Activated B cell treated with CpG ODN at 0.5 μM for 24 hours (primary cell): ENCODE measurements at regions of chrX and their contacts with region 1.

Region 1: GRCh38 chrX:120244735-120245498 is 5.7 kb upstream of the ZBTB33 start:
- DNase-seq: peak; percentile 40
- ATAC-seq: peak; percentile 82
- H3K4me3 Mint-ChIP-seq: peak overlapping the region; percentile 94
- H3K27ac Mint-ChIP-seq: peak overlapping the region; percentile 93
- H3K4me1 Mint-ChIP-seq: peaks cover 16% of the 10 kb centered on the region
- H3K27me3 Mint-ChIP-seq: no peaks in the 10 kb centered on the region
- CTCF ChIP-seq: no peak

Region 2: DNA sequence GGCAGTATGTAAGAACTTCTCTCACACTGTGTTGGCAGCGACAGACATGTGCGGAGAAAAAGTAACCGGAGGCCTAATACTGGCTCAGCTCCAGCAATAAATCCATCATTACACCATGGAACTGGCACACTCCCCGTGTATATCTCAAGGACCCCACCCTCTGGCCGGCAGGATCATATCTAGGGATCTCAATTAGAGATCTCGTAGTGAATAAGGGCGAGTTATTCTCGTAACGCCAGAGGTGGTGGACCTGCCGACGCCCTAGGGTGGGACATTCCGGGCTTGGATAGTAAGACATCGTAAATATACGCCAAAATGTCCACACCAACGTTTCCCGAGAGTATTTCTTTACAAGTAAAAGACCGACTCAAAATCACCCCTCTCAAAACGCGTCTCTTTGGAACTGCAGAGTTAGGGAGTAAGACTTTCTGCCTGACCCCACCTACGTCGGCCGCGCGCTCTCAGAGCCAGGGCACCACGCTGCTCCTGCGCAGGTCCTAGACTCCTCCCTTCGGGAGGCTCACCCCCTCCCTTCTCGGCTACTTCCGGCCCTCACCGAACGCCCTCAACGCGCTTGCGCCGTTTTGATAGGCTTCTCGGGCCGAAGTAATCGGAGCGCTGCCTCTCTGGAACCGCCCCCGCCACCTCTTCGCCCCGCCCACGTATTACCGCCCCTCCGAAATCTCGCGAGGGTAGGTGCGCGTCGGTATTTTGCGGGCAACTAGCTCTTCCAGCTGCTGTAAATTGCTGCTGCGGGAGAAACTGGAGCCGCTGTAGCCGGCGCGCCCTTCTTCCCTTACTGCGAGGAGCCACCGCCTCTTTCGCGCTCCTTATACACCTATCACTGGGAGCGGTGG is 1899.3 kb before region 1 on chrX and contains the start of gene WDR44:
- CTCF ChIA-PET with region 1: no interaction called
- POLR2A ChIA-PET with region 1: no interaction called
- intact Hi-C with region 1: loop called (anchors 5 kb)
- DNase-seq: peak; percentile 82
- ATAC-seq: peak; percentile 89
- H3K4me3 Mint-ChIP-seq: peak within 1 kb of the TSS; percentile 98
- H3K27ac Mint-ChIP-seq: peak within 1 kb of the TSS; percentile 97
- H3K4me1 Mint-ChIP-seq: peaks cover 39% of the 10 kb centered on the region
- H3K27me3 Mint-ChIP-seq: no peaks in the 10 kb centered on the region
- CTCF ChIP-seq: no peak
- total RNA-seq, gene WDR44: 15.3 and 18.7 TPM in 2 replicates

Region 3: GRCh38 chrX:119943185-119943988 is 301.5 kb before region 1 on chrX and contains the start of gene NKAP:
- CTCF ChIA-PET with region 1: no interaction called
- POLR2A ChIA-PET with region 1: no interaction called
- intact Hi-C with region 1: loop called (anchors 1 kb)
- DNase-seq: peak; percentile 70
- ATAC-seq: peak; percentile 85
- H3K4me3 Mint-ChIP-seq: peak within 1 kb of the TSS; percentile 84
- H3K27ac Mint-ChIP-seq: peak within 1 kb of the TSS; percentile 86
- H3K4me1 Mint-ChIP-seq: peaks cover 23% of the 10 kb centered on the region
- H3K27me3 Mint-ChIP-seq: peaks cover 2% of the 10 kb centered on the region
- CTCF ChIP-seq: no peak
- total RNA-seq, gene NKAP: 11.6 and 11.9 TPM in 2 replicates